AG04450 (cell line): ENCODE measurements at regions of chr10 and their contacts with region 1.

Region 1: GRCh38 chr10:9951481-9952257 is 1066.0 kb upstream of the CELF2 start:
- DNase-seq: no peak
- H3K4me3 ChIP-seq: no peak overlapping the region
- H3K27ac ChIP-seq: no peak overlapping the region
- H3K27me3 ChIP-seq: no peaks in the 10 kb centered on the region
- CTCF ChIP-seq: no peak

Region 2: DNA sequence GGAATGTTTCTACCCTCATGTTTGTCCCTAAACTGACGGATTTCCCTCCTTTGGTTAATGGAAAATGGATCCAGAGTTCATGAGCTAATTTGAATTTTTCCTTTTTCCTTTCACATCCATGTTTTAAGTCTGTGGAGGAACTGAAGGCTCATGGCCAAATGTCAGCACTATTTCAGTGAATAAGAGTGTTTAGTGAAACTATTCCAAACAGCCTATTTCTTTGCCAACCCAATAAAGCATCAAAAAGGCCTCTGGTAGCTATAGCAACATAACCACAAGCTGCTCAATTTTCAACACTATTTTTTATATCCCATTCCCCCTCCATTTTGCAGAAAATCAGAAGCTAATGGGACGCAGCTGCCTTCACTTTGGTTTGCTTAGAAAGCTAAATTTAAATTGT is 443.1 kb before region 1 on chr10:
- CTCF ChIA-PET with region 1: no interaction called
- POLR2A ChIA-PET with region 1: no interaction called
- DNase-seq: no peak
- H3K4me3 ChIP-seq: no peak overlapping the region
- H3K27ac ChIP-seq: no peak overlapping the region
- H3K27me3 ChIP-seq: no peaks in the 10 kb centered on the region
- CTCF ChIP-seq: no peak

Region 3: GRCh38 chr10:11286261-11286852 is 1334.7 kb after region 1 on chr10:
- CTCF ChIA-PET with region 1: interaction called, 10 read pairs
- POLR2A ChIA-PET with region 1: no interaction called
- DNase-seq: no peak
- H3K4me3 ChIP-seq: no peak overlapping the region
- H3K27ac ChIP-seq: no peak overlapping the region
- H3K27me3 ChIP-seq: no peaks in the 10 kb centered on the region
- CTCF ChIP-seq: no peak